GM18951 (cell line): ENCODE measurements at regions of chr13 and their contacts with region 1.

Region 1: GRCh38 chr13:33723772-33724435 is 94.0 kb upstream of the RFC3 start:
- POLR2A ChIP-seq: no peak

Region 2: DNA sequence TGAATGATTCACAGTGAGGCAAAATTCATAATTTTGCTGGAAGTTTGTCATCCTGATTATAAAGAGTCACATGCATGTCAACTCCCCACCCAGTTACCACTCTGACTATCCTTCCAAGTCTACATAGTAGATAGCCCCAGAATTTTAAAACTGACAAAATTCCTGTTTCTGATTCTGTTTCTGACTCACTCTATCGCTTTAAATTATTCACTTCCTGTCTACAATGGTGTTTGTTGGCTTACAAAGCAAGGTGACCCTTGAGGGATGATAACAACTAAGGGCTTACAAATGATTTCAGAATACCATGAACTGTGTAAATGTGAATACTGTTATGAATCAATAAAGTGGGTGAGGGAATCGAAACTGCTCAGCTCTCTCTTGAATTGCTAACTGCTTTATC is 806.4 kb before region 1 on chr13:
- in situ Hi-C with region 1: no loop called
- POLR2A ChIP-seq: no peak

Region 3: DNA sequence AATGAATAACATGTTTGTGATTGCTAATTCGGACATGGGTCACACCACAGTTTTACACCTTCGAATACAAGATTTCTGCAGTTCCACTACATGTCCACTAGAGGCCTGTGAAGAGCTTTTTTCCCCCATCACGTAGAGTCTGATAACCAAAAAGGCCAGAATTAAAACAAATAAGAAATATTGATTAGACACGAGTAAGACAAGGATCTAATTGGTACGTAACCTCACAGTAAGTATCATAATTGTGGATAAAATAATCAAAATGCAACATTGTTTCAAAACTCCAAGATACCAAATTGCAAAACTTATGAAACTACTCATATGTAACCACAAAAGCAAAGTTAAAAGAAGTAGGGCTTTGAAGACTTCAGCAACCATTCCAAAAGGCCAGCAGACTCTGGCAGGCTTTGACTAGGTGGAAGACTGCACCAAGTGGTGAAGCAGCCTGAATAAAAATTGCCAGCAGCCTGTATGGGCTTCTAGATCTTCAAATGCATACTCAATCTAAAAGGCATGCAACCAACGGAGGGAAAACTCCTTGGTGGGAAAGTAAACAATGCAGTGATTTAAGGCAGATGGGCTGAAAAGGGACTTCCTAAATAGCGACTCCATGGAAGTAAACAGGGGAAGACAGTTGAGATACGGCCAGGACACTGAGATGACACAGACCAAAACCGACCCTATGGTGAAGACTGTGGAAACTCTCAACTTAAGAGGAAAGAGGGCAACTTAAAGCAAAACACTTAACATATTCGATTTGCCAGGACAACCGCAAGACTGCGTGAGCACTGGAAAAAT is 495.1 kb before region 1 on chr13:
- in situ Hi-C with region 1: loop called (anchors 10 kb)
- POLR2A ChIP-seq: no peak

Region 4: GRCh38 chr13:34011541-34012085 is 287.7 kb after region 1 on chr13:
- in situ Hi-C with region 1: no loop called
- POLR2A ChIP-seq: no peak

Region 5: GRCh38 chr13:35157143-35157755 is 1433.3 kb after region 1 on chr13:
- in situ Hi-C with region 1: loop called (anchors 25 kb)
- POLR2A ChIP-seq: no peak